AG04450 (cell line): ENCODE measurements at regions of chr17 and their contacts with region 1.

Region 1: DNA sequence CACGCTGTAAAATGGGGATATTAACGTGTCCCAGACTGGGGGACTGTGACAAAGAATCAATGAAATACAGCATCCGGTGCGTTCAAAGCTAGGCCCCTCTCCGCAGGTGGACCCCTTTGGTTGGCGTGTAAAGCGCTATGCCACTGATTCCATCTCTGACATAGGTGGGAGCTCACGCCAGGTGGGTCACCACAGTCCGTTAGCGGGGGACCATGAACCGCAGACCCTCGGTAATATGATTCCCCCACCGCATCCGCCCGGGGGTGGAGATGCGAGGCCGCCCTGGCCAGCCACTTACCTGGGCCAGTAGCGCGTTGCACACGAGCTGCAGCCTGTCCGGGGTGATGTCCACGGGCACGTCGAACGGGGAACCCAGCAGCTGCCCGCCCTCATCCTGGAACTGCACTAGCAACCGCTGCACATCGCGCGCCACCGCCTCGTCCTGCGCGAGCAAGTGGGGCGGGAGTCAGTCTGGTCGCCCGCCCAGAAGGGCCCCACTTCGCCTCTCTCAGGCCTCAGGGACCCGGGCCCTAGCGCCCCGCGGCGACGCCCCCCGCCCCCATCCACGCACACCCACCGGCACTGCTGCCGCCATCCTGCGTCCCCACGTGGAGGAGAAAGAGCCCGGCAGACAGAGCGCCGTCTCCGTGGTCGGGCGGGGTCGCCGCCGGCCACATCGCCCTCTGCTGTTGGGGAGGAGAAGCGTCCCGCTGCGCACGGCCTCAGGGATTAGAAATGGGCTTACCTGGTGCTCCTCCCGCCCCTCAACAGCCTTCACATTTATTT is at the start of gene NLE1:
- DNase-seq: peak; percentile 44
- H3K4me3 ChIP-seq: peak within 1 kb of the TSS; percentile 97
- H3K27ac ChIP-seq: no peak within 1 kb of the TSS
- H3K27me3 ChIP-seq: peaks cover under 1% of the 10 kb centered on the region
- CTCF ChIP-seq: peak; percentile 90
- polyA plus RNA-seq, gene NLE1: 10.5 and 14.0 TPM in 2 replicates

Region 2: DNA sequence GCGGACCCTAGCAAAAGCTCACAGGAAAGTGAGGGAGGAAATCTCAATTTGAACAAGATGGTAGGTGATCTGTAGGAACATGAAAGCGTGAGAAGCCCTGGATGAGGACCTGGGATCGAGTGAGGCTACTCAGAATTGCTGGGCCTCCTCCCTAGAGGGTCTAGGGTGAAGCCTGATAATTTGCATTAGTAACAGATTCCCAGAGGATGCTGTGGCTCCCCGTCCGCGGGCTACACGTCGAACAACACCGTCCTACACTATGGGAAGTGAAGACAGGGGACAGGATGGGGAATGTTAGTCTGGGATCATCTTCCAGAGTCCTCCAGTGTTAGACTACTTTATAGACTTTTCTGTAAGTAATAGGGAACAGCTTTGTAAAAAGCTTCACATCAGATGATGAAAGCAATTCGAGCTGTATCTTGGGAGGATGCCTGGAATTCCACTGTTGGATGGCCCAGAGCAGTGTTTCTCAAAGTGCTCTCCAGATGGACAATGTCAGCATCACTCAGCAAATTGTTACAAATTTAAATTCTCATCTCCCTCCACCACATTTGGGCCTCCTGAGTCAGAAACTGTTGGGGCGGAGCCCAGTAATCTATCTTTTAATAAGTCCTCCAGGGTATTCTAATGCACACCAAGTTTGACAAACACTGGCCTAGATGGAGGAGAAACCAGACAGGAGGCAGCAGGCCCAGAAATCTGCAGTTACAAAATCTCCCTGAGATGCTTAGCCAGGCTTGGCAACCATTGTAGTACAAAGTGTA is 13.9 kb before region 1 on chr17:
- CTCF ChIA-PET with region 1: interaction called, 8 read pairs
- POLR2A ChIA-PET with region 1: interaction called, 13 read pairs
- DNase-seq: peak; percentile 96
- H3K4me3 ChIP-seq: no peak overlapping the region
- H3K27ac ChIP-seq: peak overlapping the region; percentile 95
- H3K27me3 ChIP-seq: no peaks in the 10 kb centered on the region
- CTCF ChIP-seq: no peak

Region 3: GRCh38 chr17:35337364-35337763 is 195.5 kb after region 1 on chr17:
- CTCF ChIA-PET with region 1: no interaction called
- POLR2A ChIA-PET with region 1: no interaction called
- DNase-seq: no peak
- H3K4me3 ChIP-seq: no peak overlapping the region
- H3K27ac ChIP-seq: no peak overlapping the region
- H3K27me3 ChIP-seq: peaks cover 8% of the 10 kb centered on the region
- CTCF ChIP-seq: no peak

Region 4: GRCh38 chr17:35788504-35789368 is 646.9 kb after region 1 on chr17:
- CTCF ChIA-PET with region 1: interaction called, 10 read pairs
- POLR2A ChIA-PET with region 1: no interaction called
- DNase-seq: no peak
- H3K4me3 ChIP-seq: no peak overlapping the region
- H3K27ac ChIP-seq: peak overlapping the region; percentile 73
- H3K27me3 ChIP-seq: peaks cover 12% of the 10 kb centered on the region
- CTCF ChIP-seq: no peak